Activated CD4-positive, alpha-beta memory T cell treated with anti-CD3 and anti-CD28 coated beads for 36 hours (primary cell): ENCODE measurements at regions of chr3 and their contacts with region 1.

Region 1: DNA sequence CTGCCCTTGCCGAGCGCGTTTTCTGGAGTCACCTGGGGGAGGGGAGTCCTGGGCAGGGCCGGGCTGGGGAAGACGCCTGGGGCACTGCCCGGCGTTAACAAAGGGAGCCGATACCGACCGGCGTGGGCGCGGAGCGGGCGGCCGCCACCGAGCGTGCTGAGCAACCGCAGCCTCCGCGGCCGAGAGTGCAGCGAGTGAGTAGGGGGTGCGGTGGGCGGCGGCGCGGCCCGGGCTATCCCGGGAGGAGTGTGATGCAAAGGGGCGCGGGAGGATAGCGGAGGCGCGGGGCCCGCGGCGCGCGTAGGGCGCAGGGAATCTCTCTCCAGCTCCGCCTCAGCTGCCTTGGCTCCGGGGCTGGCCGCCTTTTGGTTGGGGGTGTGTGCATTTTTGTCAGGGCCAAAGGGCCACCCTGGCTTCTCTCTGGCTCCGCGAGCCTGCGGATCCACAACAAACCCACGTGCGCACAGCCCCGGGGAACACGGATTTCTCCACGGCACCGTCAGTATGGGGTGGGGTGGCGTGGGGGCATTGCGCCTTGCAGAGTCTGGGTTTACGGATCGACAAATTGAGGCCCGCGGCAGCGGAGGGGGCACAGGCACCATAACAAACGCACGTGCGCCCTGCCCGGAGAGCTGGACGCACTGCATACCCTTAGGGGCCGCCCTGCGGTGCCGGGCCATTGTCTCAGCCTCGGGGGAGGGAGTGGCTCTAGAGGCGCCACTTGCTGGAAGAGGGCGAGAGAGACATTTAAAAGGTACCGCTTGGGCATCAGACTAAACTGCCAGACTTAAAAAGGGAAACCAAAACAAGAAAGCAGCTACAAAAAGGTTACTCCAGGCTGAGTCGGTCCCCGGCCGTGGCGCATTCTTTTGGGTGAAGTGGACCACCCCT is 560 bp downstream of the ST6GAL1 start:
- DNase-seq: peak; percentile 79
- H3K4me3 Mint-ChIP-seq: peak overlapping the region; percentile 88
- H3K27ac Mint-ChIP-seq: peak overlapping the region; percentile 97
- H3K4me1 Mint-ChIP-seq: peaks cover 38% of the 10 kb centered on the region
- H3K27me3 Mint-ChIP-seq: no peaks in the 10 kb centered on the region

Region 2: GRCh38 chr3:186790261-186790981 is 140.5 kb before region 1 on chr3:
- CTCF ChIA-PET with region 1: no interaction called
- POLR2A ChIA-PET with region 1: no interaction called
- intact Hi-C with region 1: loop called (anchors 5 kb)
- DNase-seq: no peak
- H3K4me3 Mint-ChIP-seq: peak overlapping the region; percentile 2
- H3K27ac Mint-ChIP-seq: peak overlapping the region; percentile 67
- H3K4me1 Mint-ChIP-seq: peaks cover 42% of the 10 kb centered on the region
- H3K27me3 Mint-ChIP-seq: no peaks in the 10 kb centered on the region

Region 3: GRCh38 chr3:186849374-186849975 is 81.4 kb before region 1 on chr3:
- CTCF ChIA-PET with region 1: interaction called, 35 read pairs
- POLR2A ChIA-PET with region 1: interaction called, 3 read pairs
- intact Hi-C with region 1: loop called (anchors 1 kb)
- DNase-seq: peak; percentile 25
- H3K4me3 Mint-ChIP-seq: no peak overlapping the region
- H3K27ac Mint-ChIP-seq: no peak overlapping the region
- H3K4me1 Mint-ChIP-seq: peaks cover 18% of the 10 kb centered on the region
- H3K27me3 Mint-ChIP-seq: peaks cover 4% of the 10 kb centered on the region

Region 4: GRCh38 chr3:186953011-186953487 is 22.2 kb after region 1 on chr3:
- CTCF ChIA-PET with region 1: interaction called, 4 read pairs
- POLR2A ChIA-PET with region 1: interaction called, 5 read pairs
- intact Hi-C with region 1: loop called (anchors 1 kb)
- DNase-seq: peak; percentile 37
- H3K4me3 Mint-ChIP-seq: peak overlapping the region; percentile 21
- H3K27ac Mint-ChIP-seq: peak overlapping the region; percentile 86
- H3K4me1 Mint-ChIP-seq: peaks cover 91% of the 10 kb centered on the region
- H3K27me3 Mint-ChIP-seq: no peaks in the 10 kb centered on the region

Region 5: DNA sequence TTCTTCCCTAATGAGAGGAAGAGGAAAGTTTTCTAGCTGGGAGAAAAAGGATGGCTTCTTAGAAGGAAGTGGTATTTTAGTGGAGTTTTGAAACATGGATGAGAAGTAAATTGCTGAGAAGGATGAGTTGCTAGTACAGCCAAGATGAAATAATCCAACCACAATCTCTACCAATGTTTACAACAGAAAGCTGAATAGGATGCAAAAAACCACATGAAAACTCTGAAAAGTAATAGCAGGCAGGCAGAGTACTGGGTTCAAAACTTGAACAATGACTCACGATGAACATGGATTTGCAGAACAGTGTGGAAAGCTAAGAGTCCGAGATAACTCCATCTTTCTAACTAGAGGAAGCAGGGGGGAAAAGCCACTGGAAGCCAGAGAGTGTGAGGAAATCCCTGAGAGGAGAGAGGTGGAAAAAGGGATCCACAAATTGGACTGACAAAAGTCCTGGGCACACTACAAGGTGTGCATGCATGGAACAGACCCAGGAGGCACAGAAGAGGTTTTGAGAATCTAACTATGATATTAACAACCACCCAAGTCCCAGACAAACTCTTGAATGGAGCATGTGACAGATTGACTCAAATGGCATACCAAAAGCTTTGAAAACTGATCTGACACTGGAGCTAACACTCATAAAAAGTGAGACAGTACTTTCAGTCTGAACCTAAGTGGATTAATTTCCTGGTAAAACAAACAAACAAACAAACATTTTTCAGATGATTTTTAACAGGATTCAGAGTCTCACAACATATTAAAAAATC is 76.2 kb after region 1 on chr3:
- CTCF ChIA-PET with region 1: interaction called, 6 read pairs
- POLR2A ChIA-PET with region 1: no interaction called
- intact Hi-C with region 1: loop called (anchors 2 kb)
- DNase-seq: no peak
- H3K4me3 Mint-ChIP-seq: no peak overlapping the region
- H3K27ac Mint-ChIP-seq: peak overlapping the region; percentile 36
- H3K4me1 Mint-ChIP-seq: peaks cover 62% of the 10 kb centered on the region
- H3K27me3 Mint-ChIP-seq: no peaks in the 10 kb centered on the region

Region 6: DNA sequence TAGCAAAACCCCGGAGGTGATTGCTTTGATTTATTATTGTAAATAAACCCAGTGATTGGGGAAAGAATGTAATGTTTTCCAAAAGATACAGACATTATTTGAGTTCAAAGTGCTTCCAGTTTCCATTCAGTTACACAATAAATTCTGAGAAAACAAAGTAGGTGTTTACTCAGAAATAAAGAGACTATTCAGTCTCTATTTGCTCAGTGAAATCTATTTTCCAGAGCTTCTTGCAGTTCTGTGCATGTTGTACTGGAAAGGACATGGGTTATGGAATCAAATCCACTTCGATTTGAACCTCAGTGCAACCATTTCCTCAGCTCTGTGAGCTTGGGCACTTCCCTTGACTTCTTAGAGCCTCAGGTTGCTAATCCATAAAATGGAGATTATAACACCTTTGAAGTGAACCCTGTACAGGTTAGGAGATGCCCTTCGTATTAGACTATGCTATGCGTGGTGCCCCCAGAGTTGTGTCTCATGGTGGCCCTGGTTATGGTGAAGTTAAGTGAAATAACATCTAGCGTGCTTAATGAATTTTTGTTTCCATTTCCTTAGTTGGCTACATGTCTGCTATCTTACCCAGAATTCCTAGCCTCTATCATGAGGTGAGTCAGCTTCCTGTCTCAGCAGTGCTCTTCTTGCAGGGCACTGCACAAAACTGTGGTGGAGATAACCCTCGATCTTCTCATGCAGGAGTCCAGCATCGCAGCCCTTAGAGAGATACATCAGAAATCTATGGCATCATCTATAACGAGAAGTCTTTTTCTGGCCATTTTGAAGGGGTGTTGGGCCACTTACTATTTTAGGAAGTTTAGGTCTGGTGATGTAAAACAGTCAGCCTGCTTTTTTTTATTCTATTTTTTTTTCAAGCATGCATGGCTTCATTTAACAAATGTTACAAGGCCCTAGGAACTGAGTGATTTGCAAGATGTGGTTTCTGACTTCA is 110.7 kb after region 1 on chr3:
- CTCF ChIA-PET with region 1: no interaction called
- POLR2A ChIA-PET with region 1: interaction called, 3 read pairs
- intact Hi-C with region 1: loop called (anchors 2 kb)
- DNase-seq: peak; percentile 70
- H3K4me3 Mint-ChIP-seq: peak overlapping the region; percentile 47
- H3K27ac Mint-ChIP-seq: peak overlapping the region; percentile 92
- H3K4me1 Mint-ChIP-seq: peaks cover 82% of the 10 kb centered on the region
- H3K27me3 Mint-ChIP-seq: no peaks in the 10 kb centered on the region

Region 7: GRCh38 chr3:187139126-187139894 is 208.4 kb after region 1 on chr3 and contains the start of gene RPL39L:
- CTCF ChIA-PET with region 1: interaction called, 11 read pairs
- POLR2A ChIA-PET with region 1: interaction called, 4 read pairs
- intact Hi-C with region 1: loop called (anchors 5 kb)
- DNase-seq: peak; percentile 96
- H3K4me3 Mint-ChIP-seq: peak within 1 kb of the TSS; percentile 91
- H3K27ac Mint-ChIP-seq: peak within 1 kb of the TSS; percentile 93
- H3K4me1 Mint-ChIP-seq: peaks cover 22% of the 10 kb centered on the region
- H3K27me3 Mint-ChIP-seq: no peaks in the 10 kb centered on the region
- total RNA-seq, gene RPL39L: 22.5 to 25.2 TPM

Region 8: DNA sequence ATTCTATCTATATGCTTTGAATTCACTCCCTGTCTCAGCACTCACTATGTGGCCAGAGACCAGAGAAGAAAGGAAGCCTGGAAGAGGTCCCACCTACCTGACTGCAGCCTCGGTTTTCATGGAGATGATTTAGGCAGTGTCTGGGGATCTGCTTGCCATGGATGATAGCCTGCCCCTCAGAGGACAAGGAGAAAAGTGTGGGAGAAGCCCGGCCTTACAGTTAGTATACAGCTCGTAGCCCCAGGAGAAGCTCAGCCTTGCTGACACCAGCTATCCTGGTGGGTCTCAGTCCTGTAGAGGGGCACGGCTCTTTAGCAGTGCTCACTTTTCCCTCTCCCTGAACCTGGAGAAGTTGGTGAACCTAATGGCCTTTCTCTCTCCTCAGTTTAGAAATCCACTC is 411.4 kb after region 1 on chr3:
- CTCF ChIA-PET with region 1: no interaction called
- POLR2A ChIA-PET with region 1: no interaction called
- intact Hi-C with region 1: no loop called
- DNase-seq: no peak
- H3K4me3 Mint-ChIP-seq: no peak overlapping the region
- H3K27ac Mint-ChIP-seq: no peak overlapping the region
- H3K4me1 Mint-ChIP-seq: no peaks in the 10 kb centered on the region
- H3K27me3 Mint-ChIP-seq: peaks cover 8% of the 10 kb centered on the region